MCF 10A (cell line): ENCODE measurements at regions of chr15 and their contacts with region 1.

Region 1: DNA sequence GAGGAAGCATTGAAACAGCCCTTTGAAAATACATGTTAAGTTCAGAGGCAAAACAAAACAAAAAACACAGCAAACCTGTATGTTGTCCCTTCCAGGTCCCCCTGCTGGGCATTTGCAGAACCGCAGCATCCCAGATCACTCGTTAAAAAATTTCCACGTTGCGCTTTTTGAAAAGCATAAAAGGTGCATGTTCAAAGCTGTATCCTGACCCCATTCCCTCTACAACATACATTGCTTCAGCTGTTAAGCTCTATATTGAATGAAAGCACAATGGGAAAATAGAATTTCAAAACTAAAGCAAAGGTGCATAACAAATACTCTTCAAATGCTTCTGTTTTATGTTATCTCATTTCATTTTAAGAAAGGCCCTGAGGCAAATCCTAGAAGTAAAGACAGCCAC is 328.3 kb downstream of the THSD4 start:
- DNase-seq: peak; percentile 71
- H3K4me3 Mint-ChIP-seq: no peak overlapping the region
- H3K27ac Mint-ChIP-seq: no peak overlapping the region
- H3K4me1 Mint-ChIP-seq: peaks cover 19% of the 10 kb centered on the region
- H3K27me3 Mint-ChIP-seq: no peaks in the 10 kb centered on the region
- CTCF ChIP-seq: peak; percentile 86

Region 2: DNA sequence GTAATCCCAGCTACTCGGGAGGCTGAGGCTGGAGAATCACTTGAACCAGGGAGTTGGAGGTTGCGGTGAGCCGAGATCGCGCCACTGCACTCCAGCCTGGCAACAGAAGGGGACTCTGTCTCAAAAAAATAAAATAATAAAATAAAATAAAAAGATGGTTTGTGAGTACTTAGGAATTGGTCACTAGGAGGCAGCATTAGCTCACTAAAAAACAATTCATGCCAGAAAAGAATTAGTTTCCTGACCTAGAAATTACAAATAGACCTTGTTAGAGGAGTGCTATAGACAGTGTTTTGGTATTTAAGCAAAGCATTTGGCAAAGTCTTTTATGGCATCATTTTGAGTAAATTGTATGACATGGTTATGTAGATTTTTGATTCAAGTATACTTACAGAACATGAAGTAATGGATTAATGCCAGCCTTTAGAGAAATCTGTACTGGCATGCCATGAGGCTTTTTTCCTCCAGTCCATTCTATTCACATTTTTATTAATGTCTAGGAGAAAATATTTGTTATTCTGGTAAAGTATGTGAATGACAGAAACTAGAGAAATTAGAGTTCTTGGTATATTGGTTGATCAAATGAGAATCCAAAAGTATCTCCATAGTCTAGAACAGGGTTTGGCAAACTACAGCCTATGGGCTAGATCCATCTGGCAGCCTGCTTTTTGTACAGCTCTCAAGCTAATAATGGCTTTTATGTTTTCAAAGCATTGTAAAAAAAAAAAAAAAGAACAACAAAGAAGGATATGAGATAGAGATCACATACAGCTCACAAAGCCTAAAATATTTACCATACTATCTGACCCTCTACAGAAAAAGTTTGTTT is 469.3 kb before region 1 on chr15:
- CTCF ChIA-PET with region 1: interaction called, 18 read pairs
- POLR2A ChIA-PET with region 1: interaction called, 4 read pairs
- intact Hi-C with region 1: loop called (anchors 1 kb)
- DNase-seq: peak; percentile 52
- H3K4me3 Mint-ChIP-seq: no peak overlapping the region
- H3K27ac Mint-ChIP-seq: no peak overlapping the region
- H3K4me1 Mint-ChIP-seq: no peaks in the 10 kb centered on the region
- H3K27me3 Mint-ChIP-seq: no peaks in the 10 kb centered on the region
- CTCF ChIP-seq: peak; percentile 43

Region 3: GRCh38 chr15:71114896-71115554 is 328.5 kb before region 1 on chr15 and contains the start of gene THSD4:
- CTCF ChIA-PET with region 1: interaction called, 17 read pairs
- POLR2A ChIA-PET with region 1: interaction called, 4 read pairs
- intact Hi-C with region 1: loop called (anchors 1 kb)
- DNase-seq: peak; percentile 76
- H3K4me3 Mint-ChIP-seq: peak within 1 kb of the TSS; percentile 65
- H3K27ac Mint-ChIP-seq: peak within 1 kb of the TSS; percentile 40
- H3K4me1 Mint-ChIP-seq: peaks cover 36% of the 10 kb centered on the region
- H3K27me3 Mint-ChIP-seq: no peaks in the 10 kb centered on the region
- CTCF ChIP-seq: peak; percentile 97
- total RNA-seq, gene THSD4: 36.3 and 38.2 TPM in 2 replicates

Region 4: DNA sequence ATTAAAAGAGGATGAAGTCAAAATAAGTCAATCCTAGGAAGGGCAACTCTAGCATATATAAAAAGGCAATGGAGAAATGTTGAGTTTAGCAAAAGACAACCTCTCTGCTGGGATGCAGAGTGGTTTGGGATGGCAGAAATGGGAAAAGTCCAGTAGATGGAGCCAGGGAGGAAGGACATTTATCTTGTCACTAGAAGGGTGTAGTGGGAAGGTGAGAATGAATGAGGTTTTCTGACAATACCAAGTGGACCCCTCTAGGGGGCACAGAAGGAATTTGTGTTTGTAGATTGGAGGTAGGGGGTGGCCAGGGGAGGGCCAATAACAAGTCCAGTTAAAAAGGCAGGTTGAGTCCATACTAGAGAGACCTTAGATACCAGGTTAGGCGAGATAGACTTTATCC is 248.3 kb before region 1 on chr15:
- CTCF ChIA-PET with region 1: interaction called, 5 read pairs
- POLR2A ChIA-PET with region 1: no interaction called
- intact Hi-C with region 1: loop called (anchors 1 kb)
- DNase-seq: peak; percentile 35
- H3K4me3 Mint-ChIP-seq: no peak overlapping the region
- H3K27ac Mint-ChIP-seq: no peak overlapping the region
- H3K4me1 Mint-ChIP-seq: peaks cover 16% of the 10 kb centered on the region
- H3K27me3 Mint-ChIP-seq: no peaks in the 10 kb centered on the region
- CTCF ChIP-seq: peak; percentile 33